Activated naive CD4-positive, alpha-beta T cell treated with anti-CD3 and anti-CD28 coated beads for 36 hours (primary cell): ENCODE measurements at regions of chr3 and their contacts with region 1.

Region 1: DNA sequence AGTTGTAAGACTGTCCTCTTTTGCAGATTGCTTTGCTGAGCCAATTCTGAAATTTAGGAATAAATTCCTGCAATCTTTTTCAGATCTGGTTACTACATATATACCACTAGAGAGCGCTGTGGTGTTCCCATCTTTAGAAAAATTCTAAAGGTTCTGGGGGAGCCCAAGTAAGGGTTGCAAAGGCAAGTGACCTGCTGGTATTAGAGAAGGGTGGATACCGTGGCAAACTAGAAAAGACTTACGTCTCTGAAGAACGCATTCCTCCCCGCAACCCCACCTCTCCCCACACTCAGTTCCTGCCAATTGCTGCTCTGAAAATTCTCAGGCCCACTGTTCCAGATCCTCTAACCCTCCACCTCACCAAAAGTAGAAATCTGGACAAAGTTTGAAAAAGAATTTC is 48.5 kb downstream of the EFHB start:
- DNase-seq: no peak
- H3K4me3 Mint-ChIP-seq: no peak overlapping the region
- H3K27ac Mint-ChIP-seq: no peak overlapping the region
- H3K4me1 Mint-ChIP-seq: no peaks in the 10 kb centered on the region
- H3K27me3 Mint-ChIP-seq: no peaks in the 10 kb centered on the region

Region 2: DNA sequence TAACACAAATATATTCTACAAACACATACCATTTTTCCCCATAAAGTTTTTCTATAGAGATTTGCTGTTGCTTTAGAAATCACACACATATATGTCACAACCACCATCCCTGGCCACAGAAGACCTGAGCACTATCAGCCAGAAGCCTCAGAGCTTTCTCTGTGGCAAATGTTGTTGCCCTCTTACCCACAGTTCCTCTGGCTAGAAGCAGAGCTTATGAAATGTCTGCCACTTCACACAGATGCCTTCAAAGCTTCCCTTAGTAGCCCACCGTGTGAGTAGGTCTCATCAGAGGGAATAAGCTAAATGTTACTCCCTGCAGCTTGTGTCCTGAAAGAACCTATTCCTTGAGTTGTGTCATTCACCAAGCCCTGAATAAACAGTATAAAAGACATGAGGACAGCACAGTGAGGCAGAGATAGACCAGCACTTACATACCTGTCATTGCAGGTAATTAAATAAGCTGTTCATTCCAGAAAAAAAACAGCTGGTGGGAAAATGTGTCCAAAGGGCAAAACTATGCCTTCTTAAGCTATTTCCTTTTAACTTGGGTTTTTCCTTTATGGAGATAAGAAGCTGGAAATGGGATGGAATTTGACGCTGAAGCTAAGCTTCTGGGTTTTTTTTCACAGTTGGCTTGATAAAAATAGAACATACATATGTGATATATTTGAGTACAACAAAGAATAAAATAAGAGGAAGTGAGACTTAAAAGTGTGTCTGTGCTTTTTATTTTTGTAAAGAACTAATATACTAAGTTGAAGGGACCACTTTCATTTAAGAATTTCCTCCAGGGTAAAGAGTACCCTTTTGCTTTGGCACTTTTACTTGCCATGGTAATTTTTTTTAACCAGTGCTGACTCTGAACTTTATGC is 345.7 kb before region 1 on chr3:
- CTCF ChIA-PET with region 1: no interaction called
- intact Hi-C with region 1: no loop called
- DNase-seq: no peak
- H3K4me3 Mint-ChIP-seq: no peak overlapping the region
- H3K27ac Mint-ChIP-seq: no peak overlapping the region
- H3K4me1 Mint-ChIP-seq: no peaks in the 10 kb centered on the region
- H3K27me3 Mint-ChIP-seq: no peaks in the 10 kb centered on the region

Region 3: DNA sequence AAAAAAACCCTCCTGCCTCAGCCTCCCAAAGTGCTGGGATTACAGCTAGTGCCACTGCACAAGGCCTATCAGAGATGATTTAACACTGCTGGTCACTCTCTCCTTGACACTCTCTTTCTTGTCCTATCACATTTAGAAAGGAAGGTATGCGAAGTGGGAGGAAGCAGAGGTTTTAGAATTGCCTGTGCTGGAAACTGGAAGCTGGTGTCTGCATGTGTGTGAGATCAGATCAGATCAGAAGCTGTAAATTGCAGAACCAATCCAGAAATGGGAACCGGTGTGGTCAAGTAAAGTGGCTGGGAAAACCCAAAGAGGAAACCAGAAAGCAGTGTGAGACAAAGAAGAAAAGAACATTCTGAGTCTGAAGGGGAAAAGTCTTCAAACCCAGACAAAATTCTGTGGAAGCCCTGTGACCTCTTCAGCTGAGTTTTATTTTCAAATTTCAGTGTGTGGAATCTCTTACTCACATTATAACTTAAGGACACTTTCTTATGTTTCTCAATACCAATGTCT is 45.8 kb after region 1 on chr3:
- CTCF ChIA-PET with region 1: interaction called, 5 read pairs
- intact Hi-C with region 1: loop called (anchors 1 kb)
- DNase-seq: peak; percentile 62
- H3K4me3 Mint-ChIP-seq: no peak overlapping the region
- H3K27ac Mint-ChIP-seq: no peak overlapping the region
- H3K4me1 Mint-ChIP-seq: peaks cover 23% of the 10 kb centered on the region
- H3K27me3 Mint-ChIP-seq: peaks cover 10% of the 10 kb centered on the region

Region 4: DNA sequence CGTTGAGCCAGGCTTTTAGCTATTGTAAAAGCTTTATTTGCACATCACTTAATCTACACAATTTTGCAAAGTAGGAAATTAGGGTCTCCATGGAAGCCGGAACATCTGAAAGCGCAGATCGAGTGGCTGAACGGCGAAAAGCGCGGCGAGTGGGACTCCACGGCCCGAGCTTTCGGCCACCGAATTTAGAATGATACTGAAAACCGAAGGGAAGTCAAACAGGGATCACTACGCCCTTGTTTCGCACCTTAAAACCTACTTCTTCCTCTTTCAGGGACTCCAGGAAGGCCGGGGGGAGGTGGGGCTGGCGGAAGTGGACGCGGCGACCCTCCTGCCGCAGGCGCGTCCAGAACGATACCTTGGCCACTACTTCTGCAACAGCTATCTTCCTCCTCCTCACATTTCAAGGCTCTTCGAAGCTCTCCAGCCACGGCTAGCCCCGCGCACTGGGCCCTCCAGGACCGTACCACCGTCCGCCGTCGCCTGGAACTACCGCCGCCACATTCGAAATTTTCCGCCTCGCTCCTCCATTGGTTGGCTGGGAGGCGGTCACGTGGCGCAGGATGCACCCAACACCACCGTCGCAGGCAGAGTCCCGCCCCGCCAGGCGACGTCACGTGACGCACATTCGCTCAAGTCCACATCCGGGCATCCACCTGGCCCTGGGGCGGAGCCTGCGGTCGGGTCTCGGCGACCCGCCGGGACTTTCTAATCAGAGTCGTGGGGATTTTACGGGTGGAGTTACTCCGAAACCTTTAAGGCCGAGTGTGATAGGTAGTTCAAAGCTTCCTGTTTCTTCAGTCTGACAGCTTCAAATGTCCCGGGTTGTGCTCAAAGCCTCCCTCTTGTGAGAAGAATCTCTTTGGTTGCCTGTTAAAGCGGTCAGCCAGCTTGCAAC is 300.5 kb after region 1 on chr3 and contains the start of gene SGO1:
- CTCF ChIA-PET with region 1: no interaction called
- intact Hi-C with region 1: loop called (anchors 1 kb)
- DNase-seq: peak; percentile 99
- H3K4me3 Mint-ChIP-seq: no peak within 1 kb of the TSS
- H3K27ac Mint-ChIP-seq: no peak within 1 kb of the TSS
- H3K4me1 Mint-ChIP-seq: peaks cover 2% of the 10 kb centered on the region
- H3K27me3 Mint-ChIP-seq: no peaks in the 10 kb centered on the region
- total RNA-seq, gene SGO1: 36.2 to 37.5 TPM

Region 5: DNA sequence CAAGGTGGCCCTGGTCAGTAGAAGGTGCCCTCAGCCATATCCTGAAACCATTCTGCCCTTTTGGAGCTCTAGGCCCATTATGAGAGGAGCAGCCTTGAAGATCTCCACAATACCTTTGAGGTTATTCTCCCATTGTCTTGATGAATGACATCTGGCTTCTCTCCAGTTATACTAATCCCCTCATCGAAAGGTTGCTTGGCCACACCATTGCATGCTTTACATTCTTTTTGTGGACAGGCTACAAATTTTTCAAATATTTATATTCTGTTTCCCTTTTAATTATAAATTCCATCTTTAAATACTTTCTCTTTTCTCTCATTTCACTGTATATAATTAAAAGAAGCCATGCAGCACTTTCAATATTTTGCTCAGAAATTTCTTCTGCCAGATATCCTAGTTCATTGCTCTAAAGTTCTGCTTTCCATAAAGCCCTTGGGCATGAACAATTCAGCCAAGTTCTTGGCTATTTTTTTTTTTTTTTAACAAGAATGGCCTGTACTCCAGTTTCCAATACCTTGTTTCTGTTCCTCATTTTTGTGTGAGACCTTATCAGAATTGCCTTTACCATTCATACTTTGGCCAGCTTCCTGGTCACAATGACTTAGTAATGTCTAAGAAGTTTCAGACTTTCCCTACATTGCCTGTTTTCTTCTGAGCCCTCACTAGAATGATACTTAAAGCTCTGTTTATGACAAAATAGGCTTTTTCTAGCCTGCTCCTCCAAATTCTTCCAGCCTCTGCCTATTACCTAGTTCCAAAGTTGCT is 439.4 kb after region 1 on chr3:
- CTCF ChIA-PET with region 1: no interaction called
- intact Hi-C with region 1: loop called (anchors 10 kb)
- DNase-seq: no peak
- H3K4me3 Mint-ChIP-seq: no peak overlapping the region
- H3K27ac Mint-ChIP-seq: no peak overlapping the region
- H3K4me1 Mint-ChIP-seq: no peaks in the 10 kb centered on the region
- H3K27me3 Mint-ChIP-seq: no peaks in the 10 kb centered on the region